Activated CD8-positive, alpha-beta memory T cell treated with anti-CD3 and anti-CD28 coated beads, Interleukin-2, amount 10 ng/mL, durations not matched to agents 7 days and 5 days (primary cell): ENCODE measurements at regions of chr5 and their contacts with region 1.

Region 1: GRCh38 chr5:150122158-150122510 is 33.5 kb downstream of the PDGFRB start:
- DNase-seq: peak; percentile 75
- ATAC-seq: peak; percentile 79
- H3K4me3 Mint-ChIP-seq: no peak overlapping the region
- H3K27ac Mint-ChIP-seq: peak overlapping the region; percentile 74
- H3K4me1 Mint-ChIP-seq: peaks cover 3% of the 10 kb centered on the region
- H3K27me3 Mint-ChIP-seq: no peaks in the 10 kb centered on the region

Region 2: DNA sequence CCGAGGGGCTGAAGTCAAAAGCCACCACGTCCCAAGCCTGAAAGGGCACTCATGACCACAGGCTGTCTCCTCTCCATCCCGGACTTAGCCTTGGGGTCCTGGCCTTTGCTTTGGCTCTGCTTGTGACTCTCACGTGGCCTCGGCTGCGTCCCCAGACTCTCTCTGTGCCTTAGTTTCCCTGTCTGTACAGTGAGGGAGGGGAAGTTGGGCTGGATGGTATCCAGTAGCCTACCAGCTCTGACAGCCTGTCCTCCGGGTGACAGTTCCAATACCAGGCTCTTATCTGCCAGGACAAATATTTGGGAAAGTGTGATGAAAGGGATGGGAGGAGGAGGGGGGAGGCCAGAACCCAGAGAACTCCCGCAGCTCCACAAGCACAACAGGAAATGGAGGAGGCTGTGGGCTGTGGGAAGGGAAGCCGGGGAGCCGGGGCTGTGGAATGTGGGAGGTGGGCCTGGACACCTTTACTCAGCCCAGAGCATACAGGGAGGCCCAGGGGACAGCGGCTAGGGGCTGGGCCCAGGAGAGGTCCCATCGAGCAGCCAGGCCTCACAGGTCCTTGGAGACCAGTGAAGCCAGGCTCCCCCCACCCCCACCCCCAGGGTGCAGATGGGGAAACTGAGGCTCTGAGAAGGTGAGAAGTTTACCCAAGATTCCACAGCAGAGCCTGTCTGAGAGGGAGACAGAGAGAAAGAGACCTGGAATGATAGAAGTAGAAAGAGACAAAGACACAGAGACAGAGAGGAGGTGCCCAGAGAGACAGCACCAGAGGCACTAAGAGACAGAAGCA is 15.2 kb after region 1 on chr5:
- CTCF ChIA-PET with region 1: interaction called, 12 read pairs
- DNase-seq: no peak
- ATAC-seq: no peak
- H3K4me3 Mint-ChIP-seq: no peak overlapping the region
- H3K27ac Mint-ChIP-seq: peak overlapping the region; percentile 33
- H3K4me1 Mint-ChIP-seq: peaks cover 10% of the 10 kb centered on the region
- H3K27me3 Mint-ChIP-seq: no peaks in the 10 kb centered on the region